ENCODE measurements at regions of chr18 and their contacts with region 1.

Region 1: DNA sequence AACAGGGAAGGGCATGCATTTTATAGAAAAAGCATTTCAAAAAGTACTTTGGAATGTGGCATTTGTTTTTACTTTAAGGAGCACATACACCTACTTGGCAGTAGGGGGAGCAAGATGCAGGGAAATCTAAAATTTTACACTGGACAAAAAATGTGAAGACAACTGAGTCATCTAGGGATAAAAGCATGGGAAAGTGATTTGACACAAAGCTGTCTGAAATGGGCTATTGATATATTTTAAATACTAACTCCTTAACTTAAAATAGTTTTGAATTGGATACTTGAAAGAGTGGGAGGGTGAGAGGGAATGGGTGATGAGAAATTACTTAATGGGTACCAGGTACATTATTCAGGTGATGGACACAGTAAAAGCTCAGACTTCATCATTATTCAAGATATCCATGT is 15.8 kb downstream of the TMEM200C start:
- DNase-seq: peak in 1 of 2 experiments; percentile 19
- ATAC-seq: no peak
- H3K4me3 ChIP-seq: no peak overlapping the region
- H3K27ac ChIP-seq: no peak overlapping the region
- H3K4me1 ChIP-seq: no peaks in the 10 kb centered on the region
- CTCF ChIP-seq: peak; percentile 60
- EP300 ChIP-seq: no peak
- POLR2A ChIP-seq: no peak
- RAD21 ChIP-seq: peak; percentile 65 to 67

Region 2: DNA sequence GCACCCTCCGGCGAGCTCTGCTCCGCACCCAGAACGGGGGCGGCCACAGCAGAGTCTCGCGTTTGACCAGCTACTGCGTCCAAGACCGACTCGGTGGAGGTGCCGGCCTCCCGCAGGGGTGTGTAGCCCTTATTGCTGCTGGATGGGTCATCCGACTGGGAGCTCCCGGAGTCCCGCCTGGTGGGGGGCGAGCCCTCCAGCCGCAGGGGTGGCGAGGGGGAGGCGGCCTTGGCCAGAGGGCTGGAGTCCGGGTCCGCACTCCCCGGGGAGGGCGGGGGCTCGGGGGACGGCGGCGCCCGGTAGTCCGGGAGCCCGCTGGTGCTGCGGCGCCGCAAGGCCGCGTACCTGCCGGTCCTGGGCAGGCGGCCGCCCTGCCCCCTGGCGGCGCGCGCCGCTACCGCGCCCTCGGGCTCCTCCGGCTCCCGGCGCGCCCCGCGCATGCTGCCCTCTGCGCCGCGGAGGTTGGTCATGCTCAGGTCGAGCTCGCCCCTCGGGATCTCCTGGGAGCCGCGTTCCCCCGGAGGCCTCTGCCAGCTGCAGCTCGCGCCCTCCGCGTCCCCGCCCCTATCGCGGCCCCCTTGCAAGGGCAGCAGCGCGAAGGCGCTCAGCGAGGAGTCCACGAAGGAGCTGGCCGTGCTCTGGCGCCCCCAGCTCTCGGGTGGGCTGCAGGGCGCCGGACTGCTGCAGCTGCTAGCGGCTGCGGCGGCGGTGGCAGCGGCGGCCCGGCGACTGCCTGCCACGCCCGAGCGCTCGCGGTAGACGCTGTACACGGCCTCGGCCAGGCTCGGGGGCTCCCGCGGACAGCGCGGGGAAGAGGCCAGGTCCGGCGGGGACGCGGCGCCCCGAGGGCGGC is 11.1 kb after region 1 on chr18:
- CTCF ChIA-PET with region 1: interaction called, 11 read pairs
- POLR2A ChIA-PET with region 1: no interaction called
- DNase-seq: peak; percentile 21 to 29
- ATAC-seq: peak; percentile 89 to 97
- H3K4me3 ChIP-seq: peak overlapping the region; percentile 34
- H3K27ac ChIP-seq: no peak overlapping the region
- H3K4me1 ChIP-seq: peaks cover 6% of the 10 kb centered on the region; the same call in 2 of the 3 replicates
- CTCF ChIP-seq: peak; percentile 46
- EP300 ChIP-seq: no peak
- POLR2A ChIP-seq: no peak
- RAD21 ChIP-seq: no peak

Region 3: GRCh38 chr18:6521795-6522418 is 642.4 kb after region 1 on chr18:
- CTCF ChIA-PET with region 1: interaction called, 12 read pairs
- POLR2A ChIA-PET with region 1: no interaction called
- DNase-seq: peak in 1 of 2 experiments; percentile 17
- ATAC-seq: no peak
- H3K4me3 ChIP-seq: no peak overlapping the region
- H3K27ac ChIP-seq: no peak overlapping the region
- H3K4me1 ChIP-seq: no peaks in the 10 kb centered on the region
- CTCF ChIP-seq: peak; percentile 19; the same call in 1 of the 3 replicates
- EP300 ChIP-seq: no peak
- POLR2A ChIP-seq: no peak
- RAD21 ChIP-seq: peak; percentile 25 to 48; a peak in 2 of 5 replicates

Region 4: GRCh38 chr18:6885992-6886796 is 1006.7 kb after region 1 on chr18:
- CTCF ChIA-PET with region 1: interaction called, 12 read pairs
- POLR2A ChIA-PET with region 1: no interaction called
- DNase-seq: peak; percentile 24 to 27
- ATAC-seq: peak; percentile 73 to 74; a peak in 3 of 6 replicates
- H3K4me3 ChIP-seq: no peak overlapping the region
- H3K27ac ChIP-seq: no peak overlapping the region
- H3K4me1 ChIP-seq: no peaks in the 10 kb centered on the region
- CTCF ChIP-seq: peak; percentile 65
- EP300 ChIP-seq: no peak
- POLR2A ChIP-seq: no peak
- RAD21 ChIP-seq: peak; percentile 68 to 79